HCT116 (cell line): ENCODE measurements at regions of chr10 and their contacts with region 1.

Region 1: DNA sequence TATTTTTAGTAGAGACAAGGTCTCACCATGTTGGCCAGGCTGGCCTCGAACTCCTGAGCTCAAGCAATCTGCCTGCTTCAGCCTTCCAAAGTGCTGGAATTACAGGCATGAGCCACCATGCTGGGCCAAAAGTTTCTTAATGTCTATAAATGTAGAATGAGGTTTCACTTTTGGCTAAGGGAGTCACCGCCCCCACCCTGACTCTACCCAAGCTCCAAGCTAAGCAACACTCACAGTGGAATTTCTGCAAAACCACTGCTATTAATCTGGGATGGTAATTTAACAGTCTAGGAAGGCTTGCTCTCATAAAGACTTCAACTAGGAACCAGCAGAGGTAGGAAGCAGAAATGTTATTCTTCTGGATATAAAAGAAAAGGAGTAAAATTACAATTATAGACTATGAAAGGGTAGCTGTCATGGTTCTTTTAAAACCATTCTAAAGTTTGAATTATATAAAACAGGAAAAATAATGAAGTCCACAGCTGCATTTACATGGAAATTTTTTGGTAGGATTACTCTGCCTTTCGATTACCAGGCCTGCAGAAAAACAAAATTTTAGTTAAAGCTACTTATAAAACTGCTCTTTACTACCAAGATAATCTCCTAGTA is 211.6 kb downstream of the SFMBT2 start:
- DNase-seq: no peak
- ATAC-seq: no peak
- H3K4me3 ChIP-seq: no peak overlapping the region
- H3K27ac ChIP-seq: no peak overlapping the region
- H3K4me1 ChIP-seq: no peaks in the 10 kb centered on the region
- H3K27me3 ChIP-seq: peaks cover 20% of the 10 kb centered on the region; the same call in 1 of the 2 replicates
- CTCF ChIP-seq: no peak
- POLR2A ChIP-seq: no peak
- RAD21 ChIP-seq: no peak

Region 2: GRCh38 chr10:7153750-7154149 is 45.5 kb before region 1 on chr10:
- CTCF ChIA-PET with region 1: no interaction called
- POLR2A ChIA-PET with region 1: no interaction called
- RAD21 ChIA-PET with region 1: no interaction called
- intact Hi-C with region 1: loop called (anchors 2 kb)
- DNase-seq: no peak
- ATAC-seq: no peak
- H3K4me3 ChIP-seq: no peak overlapping the region
- H3K27ac ChIP-seq: no peak overlapping the region
- H3K4me1 ChIP-seq: no peaks in the 10 kb centered on the region
- H3K27me3 ChIP-seq: 0 out of 2 replicates have a peak, but pooled peaks cover 2% of the 10 kb centered on the region
- CTCF ChIP-seq: no peak
- POLR2A ChIP-seq: no peak
- RAD21 ChIP-seq: no peak